ENCODE measurements at regions of chr6 and their contacts with region 1.

Region 1: GRCh38 chr6:110389689-110390382 is 25.5 kb downstream of the DDO start:
- DNase-seq: no peak
- ATAC-seq: peak; percentile 35

Region 2: DNA sequence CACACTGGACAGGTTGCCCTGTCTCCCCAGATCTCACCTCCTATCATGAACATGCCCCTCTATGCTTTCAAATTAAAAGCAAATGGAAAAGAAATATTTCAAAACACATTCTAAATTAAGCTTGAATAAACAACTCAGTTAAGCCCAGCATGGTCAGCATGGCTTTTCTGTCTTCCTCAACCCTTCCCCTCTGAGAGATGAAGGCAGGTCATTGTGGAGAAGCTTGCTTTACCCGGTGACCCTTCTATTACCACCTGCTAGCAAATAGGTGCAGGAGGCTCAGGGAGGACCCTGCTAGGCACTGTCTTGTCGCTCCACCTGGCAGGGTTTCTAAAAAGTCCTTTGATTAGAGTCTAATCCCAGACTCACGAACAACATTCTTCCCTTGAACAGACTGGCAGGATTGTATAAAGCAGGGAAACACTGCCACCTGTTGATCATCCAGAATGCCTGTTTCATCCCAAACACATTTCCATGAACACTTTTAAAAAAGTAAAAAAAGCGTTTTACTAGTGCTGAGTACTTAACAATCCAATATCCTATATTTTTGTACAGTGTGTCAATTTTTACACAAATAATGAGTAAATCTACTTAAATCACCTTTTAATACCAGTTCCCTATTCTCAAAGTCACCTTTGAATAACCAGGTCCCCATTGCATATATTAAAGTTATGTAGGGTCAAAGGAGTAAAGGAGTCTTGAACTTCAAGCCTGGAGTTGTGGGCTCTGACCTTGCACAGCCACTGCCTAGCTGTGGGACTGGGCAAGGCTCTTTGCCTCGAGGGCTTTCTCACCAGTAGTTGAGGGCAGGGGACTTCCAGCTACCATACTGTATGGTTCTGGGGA is 336.2 kb before region 1 on chr6:
- intact Hi-C with region 1: loop called (anchors 5 kb)
- DNase-seq: no peak
- ATAC-seq: peak; percentile 31

Region 3: DNA sequence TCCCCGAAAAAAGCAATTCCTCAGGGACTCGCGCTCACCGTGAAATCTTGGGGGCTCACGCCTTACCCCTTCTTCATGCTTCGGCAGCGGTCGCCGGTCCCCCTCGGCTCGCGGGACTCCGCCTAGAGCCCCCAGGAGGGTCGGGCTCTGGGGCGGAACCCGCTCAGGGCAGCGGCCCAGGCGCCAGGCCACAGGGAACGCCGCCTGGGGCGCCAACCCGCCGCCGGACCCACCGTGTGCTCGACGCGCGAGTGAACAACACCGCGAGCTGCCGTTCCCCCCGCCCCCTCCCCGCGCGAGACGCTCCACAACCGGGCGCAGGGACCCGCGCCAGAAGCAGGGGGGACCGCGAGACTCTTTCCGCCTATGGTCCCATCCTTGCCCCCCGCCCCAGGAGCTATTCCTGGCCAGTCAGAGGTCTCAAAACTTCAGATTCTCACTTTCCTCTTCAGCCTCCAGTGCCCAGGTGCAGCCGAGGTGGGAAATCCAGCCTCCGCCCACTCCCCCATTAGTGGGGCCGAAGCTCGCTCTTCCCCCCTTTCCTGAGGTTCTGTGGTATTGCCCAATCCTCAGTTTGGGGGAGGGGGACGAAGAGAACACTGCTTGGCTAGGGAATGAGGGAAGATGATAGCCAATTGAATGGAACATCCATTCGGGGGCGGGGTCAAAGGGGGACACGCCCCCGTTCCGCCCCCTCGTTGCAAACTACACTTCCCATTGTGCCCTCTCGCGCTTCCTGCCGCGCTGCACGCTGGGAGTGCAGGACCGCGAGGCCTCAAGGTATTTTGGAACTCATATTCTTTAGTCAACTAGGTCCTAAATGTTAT is 210.2 kb before region 1 on chr6 and contains the start of gene WASF1:
- intact Hi-C with region 1: loop called (anchors 1 kb)
- DNase-seq: peak; percentile 96
- ATAC-seq: peak; percentile 99
- total RNA-seq, gene WASF1: 1.8 TPM

Measured in Right ventricle myocardium inferior (tissue), 1 donor.